ENCODE measurements at regions of chr12 and their contacts with region 1.

Region 1: GRCh38 chr12:93378373-93379325 is 924 bp downstream of the NUDT4 start:
- DNase-seq: peak; percentile 51
- ATAC-seq: peak; percentile 4
- H3K4me3 ChIP-seq: peak overlapping the region; percentile 97
- H3K27ac ChIP-seq: peak overlapping the region; percentile 15; the same call in 1 of the 2 replicates
- H3K4me1 ChIP-seq: peaks cover 30% of the 10 kb centered on the region
- H3K27me3 ChIP-seq: no peaks in the 10 kb centered on the region
- CTCF ChIP-seq: no peak

Region 2: GRCh38 chr12:92784795-92785562 is 593.7 kb before region 1 on chr12:
- CTCF ChIA-PET with region 1: no interaction called
- POLR2A ChIA-PET with region 1: no interaction called
- intact Hi-C with region 1: loop called (anchors 1 kb)
- DNase-seq: peak; percentile 90
- ATAC-seq: peak; percentile 99
- H3K4me3 ChIP-seq: no peak overlapping the region
- H3K27ac ChIP-seq: no peak overlapping the region
- H3K4me1 ChIP-seq: no peaks in the 10 kb centered on the region
- H3K27me3 ChIP-seq: no peaks in the 10 kb centered on the region
- CTCF ChIP-seq: peak; percentile 78

Region 3: DNA sequence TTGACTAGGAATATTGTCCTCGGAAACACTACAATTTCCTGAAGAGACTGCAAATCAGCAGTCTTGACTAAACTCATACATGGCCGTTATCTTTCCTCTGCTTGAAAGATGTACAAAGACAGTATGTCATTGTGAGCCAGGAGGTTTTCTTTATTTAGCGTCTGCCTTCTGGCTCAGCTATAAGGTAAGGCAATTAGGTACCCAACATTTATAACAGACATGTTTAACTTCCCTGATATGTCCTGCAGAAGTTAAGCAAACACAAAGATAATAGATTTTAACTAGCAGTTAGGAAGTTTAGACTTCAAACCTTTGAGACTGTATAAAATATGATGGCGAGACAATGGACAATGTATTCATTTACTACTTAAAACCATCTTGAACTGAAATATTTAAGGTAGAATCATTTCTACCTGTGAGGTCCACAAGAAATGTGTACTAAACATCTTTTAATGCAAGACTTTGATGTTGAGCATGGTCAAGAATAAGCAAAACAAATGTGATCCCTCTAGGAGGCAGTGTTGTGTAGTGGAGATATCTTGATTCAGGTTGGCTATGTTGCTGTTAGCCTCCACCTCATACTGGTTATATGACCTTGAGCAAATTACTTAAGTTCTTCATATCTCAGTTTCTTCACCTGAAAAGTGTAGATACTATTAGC is 353.4 kb before region 1 on chr12:
- CTCF ChIA-PET with region 1: no interaction called
- POLR2A ChIA-PET with region 1: no interaction called
- intact Hi-C with region 1: loop called (anchors 1 kb)
- DNase-seq: peak; percentile 72
- ATAC-seq: peak; percentile 79
- H3K4me3 ChIP-seq: no peak overlapping the region
- H3K27ac ChIP-seq: no peak overlapping the region
- H3K4me1 ChIP-seq: peaks cover 7% of the 10 kb centered on the region
- H3K27me3 ChIP-seq: no peaks in the 10 kb centered on the region
- CTCF ChIP-seq: peak; percentile 84

Region 4: GRCh38 chr12:93137656-93138612 is 240.7 kb before region 1 on chr12:
- CTCF ChIA-PET with region 1: interaction called, 3 read pairs
- POLR2A ChIA-PET with region 1: no interaction called
- intact Hi-C with region 1: loop called (anchors 1 kb)
- DNase-seq: peak; percentile 96
- ATAC-seq: peak; percentile 66
- H3K4me3 ChIP-seq: peak overlapping the region; percentile 1; the same call in 1 of the 2 replicates
- H3K27ac ChIP-seq: peak overlapping the region; percentile 77
- H3K4me1 ChIP-seq: peaks cover 53% of the 10 kb centered on the region
- H3K27me3 ChIP-seq: no peaks in the 10 kb centered on the region
- CTCF ChIP-seq: no peak

Region 5: GRCh38 chr12:93229494-93230325 is 148.9 kb before region 1 on chr12:
- CTCF ChIA-PET with region 1: no interaction called
- POLR2A ChIA-PET with region 1: no interaction called
- intact Hi-C with region 1: loop called (anchors 5 kb)
- DNase-seq: peak; percentile 94
- ATAC-seq: peak; percentile 99
- H3K4me3 ChIP-seq: no peak overlapping the region
- H3K27ac ChIP-seq: peak overlapping the region; percentile 83
- H3K4me1 ChIP-seq: peaks cover 25% of the 10 kb centered on the region
- H3K27me3 ChIP-seq: no peaks in the 10 kb centered on the region
- CTCF ChIP-seq: no peak

Region 6: DNA sequence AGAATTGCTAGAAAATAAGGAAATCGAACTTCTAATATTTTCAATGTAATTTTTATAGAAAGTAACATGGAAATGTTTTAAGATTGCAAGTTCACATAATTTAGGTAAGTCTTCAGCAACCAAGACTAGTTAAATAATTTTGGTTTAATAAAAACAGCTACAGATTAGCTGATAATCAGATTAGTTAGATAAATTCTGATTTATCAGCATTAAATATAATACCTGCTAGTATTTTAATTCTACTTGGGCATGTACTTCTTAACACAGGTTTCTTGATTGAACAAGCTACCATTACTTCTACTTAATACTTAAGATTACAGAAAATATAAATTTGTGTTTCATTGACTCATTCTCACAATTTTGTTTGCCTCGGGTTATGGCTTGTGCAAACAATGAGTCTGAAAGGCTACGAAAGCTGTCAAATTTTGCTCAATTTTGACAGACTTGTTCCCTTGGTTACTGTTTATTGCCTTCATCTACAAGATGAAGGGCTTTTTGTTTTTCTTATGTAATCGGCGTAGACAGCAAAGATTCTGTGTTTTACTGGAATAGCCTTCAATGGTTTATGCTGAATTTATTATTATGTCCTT is 117.0 kb before region 1 on chr12:
- CTCF ChIA-PET with region 1: interaction called, 4 read pairs
- POLR2A ChIA-PET with region 1: no interaction called
- intact Hi-C with region 1: loop called (anchors 10 kb)
- DNase-seq: peak; percentile 74
- ATAC-seq: peak; percentile 71
- H3K4me3 ChIP-seq: no peak overlapping the region
- H3K27ac ChIP-seq: no peak overlapping the region
- H3K4me1 ChIP-seq: peaks cover 15% of the 10 kb centered on the region
- H3K27me3 ChIP-seq: no peaks in the 10 kb centered on the region
- CTCF ChIP-seq: no peak

Measured in PC-3 (cell line).